Left cardiac atrium (tissue), 4 donors: ENCODE measurements at regions of chr7 and their contacts with region 1.

Region 1: GRCh38 chr7:98204670-98205069 is 6.6 kb upstream of the BHLHA15 start:
- DNase-seq: no peak
- ATAC-seq: no peak

Region 2: GRCh38 chr7:98185101-98185500 is 19.6 kb before region 1 on chr7:
- intact Hi-C with region 1: loop called in 1 of 2 experiments (anchors 2 kb)
- DNase-seq: no peak
- ATAC-seq: no peak